PC-9 (cell line): ENCODE measurements at regions of chr9 and their contacts with region 1.

Region 1: DNA sequence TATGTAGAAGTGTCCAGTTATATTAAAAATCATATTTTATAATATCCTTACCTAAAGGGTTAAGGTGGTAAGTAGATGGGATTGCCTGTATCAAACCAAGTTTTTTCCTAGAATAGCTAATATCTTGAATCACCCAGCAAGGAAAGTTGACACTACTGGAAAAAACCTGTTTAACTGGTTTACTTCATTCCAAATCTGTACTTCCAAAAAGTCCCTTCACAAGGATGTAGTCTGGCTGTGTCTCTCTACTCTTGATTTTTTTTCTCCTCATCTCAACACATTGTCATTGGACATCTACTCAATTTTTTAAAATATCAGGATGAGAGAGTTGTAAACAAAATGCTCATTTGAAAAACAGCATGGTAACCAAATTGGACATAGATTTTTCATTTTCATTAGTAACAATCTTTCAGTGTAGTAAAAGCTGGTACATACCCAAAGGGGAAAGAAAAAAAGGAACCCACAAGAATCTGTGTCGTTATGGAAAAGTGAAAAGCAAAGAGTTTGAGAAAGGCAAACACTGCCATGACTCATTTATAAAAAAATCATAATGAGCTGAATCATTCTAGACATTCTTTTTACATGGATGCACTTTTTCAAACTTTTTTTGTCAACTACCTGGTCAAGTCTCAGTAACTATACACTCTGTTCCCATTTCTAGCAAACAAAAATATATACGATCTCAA is 173.5 kb downstream of the GLIS3 start:
- DNase-seq: peak in 1 of 2 experiments; percentile 76
- H3K4me3 ChIP-seq: no peak overlapping the region
- H3K27ac ChIP-seq: peak overlapping the region; percentile 89
- H3K4me1 ChIP-seq: peaks cover 29% of the 10 kb centered on the region
- H3K27me3 ChIP-seq: no peaks in the 10 kb centered on the region
- CTCF ChIP-seq: no peak

Region 2: DNA sequence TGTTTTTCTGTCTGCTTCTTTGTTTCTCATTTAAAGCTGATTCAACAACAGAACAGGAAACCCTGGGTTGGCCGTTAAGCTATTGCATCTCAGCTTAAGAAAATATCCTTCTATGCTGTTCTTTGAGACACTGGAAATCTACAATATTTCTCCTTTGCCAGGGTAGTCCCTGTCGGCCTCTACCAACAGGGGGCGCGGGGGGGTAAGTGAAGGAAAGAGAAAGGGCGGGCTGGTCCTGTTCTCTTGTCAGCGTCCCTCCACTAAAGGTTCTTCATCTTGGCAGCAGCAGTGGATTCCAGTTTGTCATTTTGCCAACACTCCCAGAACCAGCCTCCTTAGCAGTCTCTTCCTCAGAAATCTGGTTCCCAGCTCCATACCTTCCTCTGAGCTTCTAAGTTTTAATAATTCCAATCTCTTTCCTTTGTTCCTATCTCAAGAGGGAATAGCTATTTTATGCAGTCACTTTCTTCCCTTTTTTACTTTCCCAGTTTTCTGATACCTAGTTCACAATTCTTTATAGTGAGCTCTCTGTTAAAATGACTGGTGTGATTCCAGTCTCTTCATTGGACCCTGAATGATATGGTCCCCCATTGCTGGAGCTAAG is 48.7 kb before region 1 on chr9:
- CTCF ChIA-PET with region 1: interaction called, 6 read pairs
- POLR2A ChIA-PET with region 1: no interaction called
- intact Hi-C with region 1: loop called (anchors 2 kb)
- DNase-seq: peak in 1 of 2 experiments; percentile 70
- H3K4me3 ChIP-seq: no peak overlapping the region
- H3K27ac ChIP-seq: no peak overlapping the region
- H3K4me1 ChIP-seq: no peaks in the 10 kb centered on the region
- H3K27me3 ChIP-seq: no peaks in the 10 kb centered on the region
- CTCF ChIP-seq: peak; percentile 73

Region 3: GRCh38 chr9:4207881-4208615 is 81.7 kb after region 1 on chr9:
- CTCF ChIA-PET with region 1: no interaction called
- POLR2A ChIA-PET with region 1: no interaction called
- intact Hi-C with region 1: no loop called
- DNase-seq: no peak
- H3K4me3 ChIP-seq: no peak overlapping the region
- H3K27ac ChIP-seq: no peak overlapping the region
- H3K4me1 ChIP-seq: no peaks in the 10 kb centered on the region
- H3K27me3 ChIP-seq: no peaks in the 10 kb centered on the region
- CTCF ChIP-seq: no peak

Region 4: DNA sequence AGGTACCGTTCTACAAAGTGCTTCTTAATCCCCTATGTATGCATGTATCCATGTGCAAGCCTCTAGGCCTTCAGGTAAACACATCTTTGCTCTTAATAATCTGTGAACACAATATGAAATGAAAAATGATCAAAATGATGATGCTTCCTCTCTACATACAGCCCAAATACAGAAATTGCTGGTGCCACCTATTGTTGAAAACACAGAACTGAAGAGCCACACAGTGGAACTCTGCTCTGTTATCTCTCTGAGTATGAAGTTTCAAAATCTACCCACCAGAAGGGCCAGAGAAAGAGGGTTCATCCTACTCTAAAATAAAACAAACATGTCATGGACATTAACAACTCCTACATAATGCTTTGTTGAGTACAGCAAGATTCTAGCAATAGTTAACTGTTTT is 102.3 kb after region 1 on chr9:
- CTCF ChIA-PET with region 1: no interaction called
- POLR2A ChIA-PET with region 1: no interaction called
- intact Hi-C with region 1: loop called (anchors 5 kb)
- DNase-seq: no peak
- H3K4me3 ChIP-seq: no peak overlapping the region
- H3K27ac ChIP-seq: no peak overlapping the region
- H3K4me1 ChIP-seq: peaks cover 13% of the 10 kb centered on the region; the same call in 1 of the 2 replicates
- H3K27me3 ChIP-seq: no peaks in the 10 kb centered on the region
- CTCF ChIP-seq: peak; percentile 55